ENCODE measurements at regions of chr11 and their contacts with region 1.

Region 1: DNA sequence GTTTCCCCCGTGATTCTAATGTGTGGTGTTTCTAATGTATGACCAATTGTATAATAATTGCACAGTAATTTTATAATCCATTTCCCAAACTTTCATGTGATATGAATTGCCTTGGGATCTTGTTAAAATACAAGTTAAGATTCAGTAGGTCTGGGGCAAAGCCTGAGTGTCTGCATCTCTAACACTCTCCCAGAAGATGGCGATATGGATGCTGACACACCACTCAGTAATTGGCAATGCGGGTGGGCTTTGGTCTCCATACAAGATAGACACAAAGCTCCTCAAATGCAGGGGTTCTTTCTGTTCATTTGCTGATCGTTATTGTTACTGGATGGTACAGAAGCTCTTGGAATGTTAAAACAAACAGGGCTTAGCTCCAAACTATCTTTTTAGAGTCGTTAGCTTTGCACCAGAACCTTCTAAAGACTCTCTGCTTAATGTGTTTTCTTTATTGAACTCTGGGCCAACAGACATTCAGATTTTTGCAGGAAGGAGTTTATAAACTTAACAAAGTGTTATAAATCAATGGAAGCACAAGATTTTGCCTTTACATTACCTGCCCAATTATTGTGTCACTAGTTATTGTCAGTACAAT is 45.4 kb upstream of the ANO3 start:
- DNase-seq: no peak
- H3K4me3 ChIP-seq: no peak overlapping the region
- H3K27ac ChIP-seq: no peak overlapping the region
- H3K4me1 ChIP-seq: peaks cover 0 to 4% (median 3%) of the 10 kb centered on the region in 4 experiments; a peak in 3 of 7 replicates
- H3K27me3 ChIP-seq: no peaks in the 10 kb centered on the region
- CTCF ChIP-seq: peak; percentile 11 to 60 (median 56)
- EP300 ChIP-seq: no peak
- POLR2A ChIP-seq: no peak
- RAD21 ChIP-seq: peak; percentile 61 to 66

Region 2: GRCh38 chr11:26268980-26269660 is 17.4 kb before region 1 on chr11:
- CTCF ChIA-PET with region 1: interaction called, 13 read pairs
- POLR2A ChIA-PET with region 1: interaction called, 3 read pairs
- DNase-seq: no peak
- H3K4me3 ChIP-seq: no peak overlapping the region
- H3K27ac ChIP-seq: no peak overlapping the region
- H3K4me1 ChIP-seq: peaks cover 0 to 4% (median 0%) of the 10 kb centered on the region in 4 experiments; a peak in 1 of 7 replicates
- H3K27me3 ChIP-seq: no peaks in the 10 kb centered on the region
- CTCF ChIP-seq: no peak
- EP300 ChIP-seq: no peak
- POLR2A ChIP-seq: no peak
- RAD21 ChIP-seq: no peak

Region 3: GRCh38 chr11:26297189-26297975 is 10.8 kb after region 1 on chr11:
- CTCF ChIA-PET with region 1: interaction called, 17 read pairs
- POLR2A ChIA-PET with region 1: no interaction called
- DNase-seq: no peak
- H3K4me3 ChIP-seq: no peak overlapping the region
- H3K27ac ChIP-seq: no peak overlapping the region
- H3K4me1 ChIP-seq: no peaks in the 10 kb centered on the region
- H3K27me3 ChIP-seq: no peaks in the 10 kb centered on the region
- CTCF ChIP-seq: peak in 2 of 3 experiments; percentile 49 to 51; a peak in 3 of 4 replicates
- EP300 ChIP-seq: no peak
- POLR2A ChIP-seq: no peak
- RAD21 ChIP-seq: peak; percentile 76 to 78

Region 4: GRCh38 chr11:26353010-26353409 is 66.4 kb after region 1 on chr11:
- CTCF ChIA-PET with region 1: no interaction called
- POLR2A ChIA-PET with region 1: no interaction called
- DNase-seq: no peak
- H3K4me3 ChIP-seq: no peak overlapping the region
- H3K27ac ChIP-seq: no peak overlapping the region
- H3K4me1 ChIP-seq: no peaks in the 10 kb centered on the region
- H3K27me3 ChIP-seq: no peaks in the 10 kb centered on the region
- CTCF ChIP-seq: no peak
- EP300 ChIP-seq: no peak
- POLR2A ChIP-seq: no peak
- RAD21 ChIP-seq: no peak

Measured in H1 (cell line).